ENCODE measurements at regions of chr2 and their contacts with region 1.

Region 1: DNA sequence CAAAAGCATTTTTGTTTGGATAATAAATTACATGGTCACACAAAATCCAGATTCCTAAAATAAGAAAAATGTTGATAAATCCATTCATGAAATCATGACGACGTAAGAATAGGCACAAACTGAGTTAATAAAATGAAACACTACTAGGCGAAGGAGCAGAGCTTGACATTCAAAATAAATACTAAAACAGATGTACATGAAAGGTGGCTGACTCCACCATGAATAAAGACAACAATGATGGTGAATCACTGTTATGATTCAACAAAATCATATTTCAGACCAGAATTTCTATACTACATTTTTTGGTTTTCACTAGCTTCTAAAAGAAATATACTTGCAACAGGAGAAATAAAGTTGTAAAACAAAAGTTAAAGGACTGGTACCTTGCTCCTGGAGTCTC is 122.0 kb upstream of the RNU4ATAC start:
- DNase-seq: no peak
- H3K4me3 ChIP-seq: no peak overlapping the region
- H3K27ac ChIP-seq: no peak overlapping the region
- H3K4me1 ChIP-seq: no peaks in the 10 kb centered on the region
- H3K27me3 ChIP-seq: no peaks in the 10 kb centered on the region
- CTCF ChIP-seq: no peak
- POLR2A ChIP-seq: no peak

Region 2: GRCh38 chr2:121722479-121722878 is 313.8 kb after region 1 on chr2:
- intact Hi-C with region 1: loop called (anchors 5 kb)
- DNase-seq: no peak
- H3K4me3 ChIP-seq: no peak overlapping the region
- H3K27ac ChIP-seq: no peak overlapping the region
- H3K4me1 ChIP-seq: peaks cover 0 to 20% (median 0%) of the 10 kb centered on the region in 3 donors
- H3K27me3 ChIP-seq: no peaks in the 10 kb centered on the region
- CTCF ChIP-seq: peak in 1 of 6 experiments; percentile 25
- POLR2A ChIP-seq: no peak

Measured in esophagus squamous epithelium (tissue), 5 donors.